H1 (cell line): ENCODE measurements at regions of chr11 and their contacts with region 1.

Region 1: DNA sequence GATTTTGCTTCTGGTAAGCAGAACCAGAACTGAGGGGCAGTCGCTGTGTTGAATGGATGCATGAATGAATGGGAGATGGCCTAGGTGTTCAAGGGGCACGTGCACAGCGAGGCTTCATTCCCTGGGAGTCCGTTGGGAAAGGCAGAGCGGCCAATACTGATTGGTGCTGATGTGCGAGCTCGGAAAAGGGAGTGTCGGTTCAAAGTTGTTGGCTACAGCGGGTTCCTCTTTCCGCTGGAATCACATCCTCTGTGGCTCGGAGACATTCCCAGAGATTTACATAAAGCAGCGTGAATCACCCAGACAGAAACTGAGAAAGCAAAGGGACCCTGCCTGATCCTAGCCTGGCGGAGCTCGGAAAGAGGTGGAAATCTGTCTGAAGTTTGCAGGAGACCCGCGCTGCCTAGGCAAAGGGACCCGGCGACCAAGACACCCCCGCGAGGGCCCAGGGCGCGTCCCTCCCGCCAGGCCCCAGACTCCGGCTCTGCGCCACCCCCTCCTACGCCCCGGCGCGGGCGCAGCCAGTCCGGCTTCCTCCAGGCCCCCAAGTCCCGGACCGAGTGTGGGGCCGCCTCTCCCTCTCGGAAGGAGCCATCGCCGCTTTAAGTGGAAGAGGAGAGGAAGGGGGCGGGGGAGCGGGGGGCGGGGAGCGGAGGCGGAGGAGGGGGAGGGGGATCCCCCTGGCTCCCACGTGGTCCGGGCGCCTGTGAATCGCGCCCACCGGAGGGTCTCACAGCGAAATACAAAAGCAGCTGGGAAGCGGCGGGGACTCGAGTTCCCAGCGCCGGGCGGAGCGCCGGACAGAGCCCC is at the start of gene FJX1:
- DNase-seq: peak; percentile 44 to 86
- H3K4me3 ChIP-seq: peak within 1 kb of the TSS; percentile 55 to 76 (median 72)
- H3K27ac ChIP-seq: no peak within 1 kb of the TSS
- H3K4me1 ChIP-seq: peaks cover 3 to 19% (median 6%) of the 10 kb centered on the region in 4 experiments; a peak in 5 of 7 replicates
- H3K27me3 ChIP-seq: peaks cover 7 to 29% (median 22%) of the 10 kb centered on the region in 4 experiments
- CTCF ChIP-seq: no peak
- EP300 ChIP-seq: no peak
- POLR2A ChIP-seq: no peak
- RAD21 ChIP-seq: no peak
- total RNA-seq, gene FJX1: 13.3 and 14.2 TPM in 2 replicates

Region 2: DNA sequence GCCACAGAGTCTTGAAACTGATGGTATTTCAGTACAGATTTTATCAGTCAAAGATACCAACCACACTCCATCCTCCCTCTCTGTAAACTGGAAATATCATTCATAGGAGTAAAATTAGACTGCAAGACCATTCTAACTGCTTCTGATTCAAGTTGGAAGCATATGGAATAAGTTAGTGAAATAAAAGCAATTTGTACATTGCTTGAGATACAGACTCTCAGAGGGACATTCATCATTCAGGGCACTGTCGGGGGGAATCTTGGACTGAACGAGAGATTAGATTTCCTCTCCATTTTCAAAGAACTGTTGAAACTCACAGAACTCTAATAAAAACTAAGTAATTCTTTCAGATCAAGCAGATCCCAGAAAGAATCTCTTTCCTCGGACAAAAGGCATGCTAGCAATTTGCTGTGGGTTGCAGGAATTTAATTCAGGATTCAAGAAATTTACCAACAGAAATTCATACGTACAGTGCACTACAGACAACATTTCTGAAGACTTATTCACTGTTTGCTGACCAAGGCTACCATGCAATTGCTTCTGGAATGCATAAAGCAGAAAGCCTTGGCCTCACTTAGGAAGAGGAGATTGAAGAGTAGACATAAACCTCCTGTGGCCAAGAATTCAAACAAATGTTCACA is 126.5 kb before region 1 on chr11:
- CTCF ChIA-PET with region 1: interaction called, 14 read pairs
- POLR2A ChIA-PET with region 1: no interaction called
- DNase-seq: no peak
- H3K4me3 ChIP-seq: no peak overlapping the region
- H3K27ac ChIP-seq: no peak overlapping the region
- H3K4me1 ChIP-seq: 0 out of 7 replicates have a peak, but pooled peaks cover 0 to 1% (median 0%) of the 10 kb centered on the region in 4 experiments
- H3K27me3 ChIP-seq: no peaks in the 10 kb centered on the region; a peak in 1 of 7 replicates
- CTCF ChIP-seq: no peak
- EP300 ChIP-seq: no peak
- POLR2A ChIP-seq: no peak
- RAD21 ChIP-seq: no peak

Region 3: DNA sequence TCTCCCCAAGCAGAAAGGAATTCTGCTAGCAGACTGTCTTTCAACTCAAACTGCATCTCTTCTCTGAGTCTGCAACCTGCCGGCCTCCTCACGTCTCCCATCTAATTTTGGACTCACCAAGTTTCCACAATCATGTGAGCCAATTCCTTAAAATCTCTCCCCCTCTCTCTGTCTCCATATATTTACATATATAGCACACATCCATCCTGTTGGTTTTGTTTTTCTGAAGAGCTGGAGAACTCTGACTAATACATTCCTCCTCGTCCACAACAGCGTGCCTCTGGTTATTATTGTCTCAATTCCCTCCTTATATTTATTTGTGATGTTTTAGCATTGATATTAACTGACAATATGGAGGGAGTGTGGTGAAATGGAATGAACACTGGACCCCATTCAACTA is 29.3 kb before region 1 on chr11:
- CTCF ChIA-PET with region 1: no interaction called
- POLR2A ChIA-PET with region 1: no interaction called
- DNase-seq: no peak
- H3K4me3 ChIP-seq: no peak overlapping the region
- H3K27ac ChIP-seq: no peak overlapping the region
- H3K4me1 ChIP-seq: no peaks in the 10 kb centered on the region
- H3K27me3 ChIP-seq: no peaks in the 10 kb centered on the region
- CTCF ChIP-seq: no peak
- EP300 ChIP-seq: no peak
- POLR2A ChIP-seq: no peak
- RAD21 ChIP-seq: no peak

Region 4: GRCh38 chr11:35605711-35606110 is 12.2 kb before region 1 on chr11:
- CTCF ChIA-PET with region 1: interaction called, 16 read pairs
- POLR2A ChIA-PET with region 1: interaction called, 7 read pairs
- DNase-seq: no peak
- H3K4me3 ChIP-seq: no peak overlapping the region
- H3K27ac ChIP-seq: no peak overlapping the region
- H3K4me1 ChIP-seq: peaks cover 0 to 14% (median 5%) of the 10 kb centered on the region in 4 experiments; a peak in 5 of 7 replicates
- H3K27me3 ChIP-seq: peaks cover 0 to 3% (median 0%) of the 10 kb centered on the region in 4 experiments; a peak in 2 of 7 replicates
- CTCF ChIP-seq: no peak
- EP300 ChIP-seq: no peak
- POLR2A ChIP-seq: no peak
- RAD21 ChIP-seq: 0 out of 4 replicates have a peak, but pooled peaks of 1 of the 2 experiments have one; percentile 7

Region 5: DNA sequence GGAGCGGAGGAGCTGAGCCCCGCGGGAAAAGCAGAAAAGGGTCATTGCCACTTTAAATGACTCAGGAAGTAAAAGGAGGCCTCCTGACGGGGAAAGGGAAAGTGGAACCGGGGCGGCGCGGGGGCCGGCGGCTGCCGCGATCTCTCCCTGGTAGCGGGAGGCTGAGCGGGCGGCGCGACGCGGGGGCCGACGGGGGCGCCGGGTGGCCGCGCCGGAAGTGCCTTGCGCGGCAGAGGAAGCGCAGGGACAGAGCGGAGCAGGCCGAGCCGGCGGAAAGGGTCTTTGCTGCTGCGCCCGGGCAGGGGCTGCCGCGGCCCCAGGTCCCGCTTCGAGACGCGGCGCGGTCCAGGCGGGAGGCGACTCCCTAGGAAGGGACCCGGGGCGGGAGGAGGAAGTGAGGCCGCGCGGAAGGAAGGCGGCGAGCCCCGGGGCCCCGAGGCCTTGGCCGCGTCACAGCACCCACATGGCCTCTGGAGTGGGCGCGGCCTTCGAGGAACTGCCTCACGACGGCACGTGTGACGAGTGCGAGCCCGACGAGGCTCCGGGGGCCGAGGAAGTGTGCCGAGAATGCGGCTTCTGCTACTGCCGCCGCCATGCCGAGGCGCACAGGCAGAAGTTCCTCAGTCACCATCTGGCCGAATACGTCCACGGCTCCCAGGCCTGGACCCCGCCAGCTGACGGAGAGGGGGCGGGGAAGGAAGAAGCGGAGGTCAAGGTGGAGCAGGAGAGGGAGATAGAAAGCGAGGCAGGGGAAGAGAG is 44.9 kb after region 1 on chr11 and contains the start of gene TRIM44:
- CTCF ChIA-PET with region 1: interaction called, 3 read pairs
- POLR2A ChIA-PET with region 1: interaction called, 14 read pairs
- DNase-seq: peak; percentile 31 to 82
- H3K4me3 ChIP-seq: peak within 1 kb of the TSS; percentile 43 to 70 (median 52)
- H3K27ac ChIP-seq: peak within 1 kb of the TSS; percentile 44; the same call in 1 of the 2 replicates
- H3K4me1 ChIP-seq: peaks cover 0 to 5% (median 3%) of the 10 kb centered on the region in 4 experiments; a peak in 3 of 7 replicates
- H3K27me3 ChIP-seq: peaks cover 1 to 32% (median 20%) of the 10 kb centered on the region in 4 experiments
- CTCF ChIP-seq: no peak
- EP300 ChIP-seq: no peak
- POLR2A ChIP-seq: no peak; a peak in 1 of 3 replicates
- RAD21 ChIP-seq: no peak; a peak in 1 of 4 replicates
- total RNA-seq, gene TRIM44: 34.4 and 34.7 TPM in 2 replicates